Mammary epithelial cell (primary cell): ENCODE measurements at regions of chr1 and their contacts with region 1.

Region 1: DNA sequence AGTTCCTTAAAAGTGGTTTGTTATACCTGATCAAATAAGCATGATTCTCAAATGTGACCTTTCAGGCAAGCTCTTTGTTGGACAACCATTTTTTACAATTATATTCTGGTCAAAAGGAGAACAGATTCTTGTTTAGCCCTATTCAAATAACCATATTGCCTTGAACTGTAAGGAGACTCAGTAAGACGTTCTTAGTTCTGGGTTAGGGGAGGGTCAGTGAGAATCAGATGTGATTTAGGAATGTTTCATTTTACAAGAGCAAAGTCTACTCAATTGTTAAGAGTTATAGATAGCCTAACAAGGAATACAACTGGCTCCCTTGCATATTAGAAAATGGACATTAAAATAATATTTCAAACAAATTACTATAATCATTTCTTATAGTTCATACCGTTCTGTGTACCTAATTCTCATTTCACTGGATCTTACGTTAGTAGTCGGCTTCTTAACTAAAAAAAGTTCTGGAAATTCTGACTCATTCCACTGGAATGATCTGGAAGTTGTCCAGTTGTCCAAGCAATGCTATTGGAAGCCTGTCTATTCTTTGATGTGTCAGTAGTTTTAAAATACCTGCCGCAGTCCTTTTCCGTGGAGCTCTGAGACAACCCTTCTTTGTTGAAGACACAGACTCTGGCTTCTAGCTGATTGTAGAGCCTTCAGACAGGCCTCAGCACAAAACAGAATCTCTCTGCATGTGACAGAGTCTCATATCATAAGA is 88.8 kb downstream of the MAST2 start:
- DNase-seq: peak; percentile 87
- H3K4me3 ChIP-seq: peak overlapping the region in 2 of 3 experiments; percentile 6 to 15
- H3K27ac ChIP-seq: peak overlapping the region; percentile 78
- H3K4me1 ChIP-seq: peaks cover 14% of the 10 kb centered on the region
- H3K27me3 ChIP-seq: no peaks in the 10 kb centered on the region
- CTCF ChIP-seq: no peak

Region 2: DNA sequence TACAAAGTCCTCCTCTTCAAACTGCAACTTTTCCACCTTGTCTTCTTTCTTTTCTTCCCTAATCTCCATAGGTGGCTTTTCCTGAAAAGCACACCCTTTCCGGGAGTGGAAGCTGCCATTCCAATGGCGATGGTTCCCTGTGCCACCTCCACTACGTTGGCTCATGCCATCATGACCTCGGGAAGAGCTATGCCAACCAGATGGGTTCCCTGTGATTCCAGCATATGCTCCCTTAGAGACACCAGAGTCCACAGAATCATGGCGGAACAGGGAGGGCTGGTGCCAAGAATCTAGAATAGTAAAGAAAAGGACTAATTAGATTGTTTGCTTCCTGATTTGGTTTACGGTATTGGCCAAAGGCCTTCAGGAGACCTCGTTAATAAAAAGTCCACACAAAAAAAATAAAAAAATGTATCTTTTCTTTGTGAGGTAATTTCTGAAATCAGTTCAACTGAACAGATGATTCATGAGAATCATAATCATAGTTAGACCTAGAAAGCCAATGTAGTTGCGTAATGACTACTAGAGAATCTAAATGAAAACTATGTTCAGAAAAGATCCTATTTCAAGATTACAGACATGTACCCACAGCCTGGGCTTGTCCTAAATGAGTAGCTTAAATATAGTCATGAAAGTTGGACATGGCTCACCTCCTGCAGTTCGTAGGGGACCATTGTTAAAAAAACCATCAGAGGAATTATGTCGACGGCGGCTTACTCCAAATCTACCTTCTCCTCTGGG is 237.5 kb before region 1 on chr1:
- CTCF ChIA-PET with region 1: no interaction called
- dilution Hi-C with region 1: no loop called
- in situ Hi-C with region 1: loop called in 1 of 2 experiments (anchors 25 kb)
- intact Hi-C with region 1: no loop called
- DNase-seq: peak; percentile 74
- H3K4me3 ChIP-seq: no peak overlapping the region
- H3K27ac ChIP-seq: no peak overlapping the region
- H3K4me1 ChIP-seq: no peaks in the 10 kb centered on the region
- H3K27me3 ChIP-seq: no peaks in the 10 kb centered on the region
- CTCF ChIP-seq: no peak

Region 3: GRCh38 chr1:45713711-45714110 is 178.5 kb before region 1 on chr1:
- CTCF ChIA-PET with region 1: no interaction called
- dilution Hi-C with region 1: no loop called
- in situ Hi-C with region 1: no loop called
- intact Hi-C with region 1: no loop called
- DNase-seq: no peak
- H3K4me3 ChIP-seq: no peak overlapping the region
- H3K27ac ChIP-seq: no peak overlapping the region
- H3K4me1 ChIP-seq: no peaks in the 10 kb centered on the region
- H3K27me3 ChIP-seq: no peaks in the 10 kb centered on the region
- CTCF ChIP-seq: no peak

Region 4: DNA sequence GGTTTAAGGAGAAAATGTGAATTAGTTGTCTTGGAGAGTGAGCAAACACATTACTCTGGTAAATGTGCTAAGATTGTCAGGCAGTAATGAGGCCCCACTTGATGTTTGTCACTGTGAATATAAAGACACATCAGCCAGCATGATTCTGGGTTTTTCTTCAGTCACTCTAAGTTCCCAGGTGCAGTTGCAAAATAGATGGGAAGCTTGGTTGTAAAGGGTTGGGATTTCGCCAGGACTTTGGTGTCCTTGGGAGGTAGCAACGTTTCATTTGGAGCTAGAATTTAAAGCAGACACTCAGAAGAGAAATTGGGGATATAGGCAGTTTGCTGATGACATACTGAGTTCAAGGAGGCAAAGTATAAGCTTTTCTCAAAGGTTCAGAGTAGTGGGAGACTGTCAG is 65.5 kb after region 1 on chr1:
- CTCF ChIA-PET with region 1: no interaction called
- dilution Hi-C with region 1: loop called (anchors 5 kb)
- in situ Hi-C with region 1: no loop called
- intact Hi-C with region 1: no loop called
- DNase-seq: no peak
- H3K4me3 ChIP-seq: no peak overlapping the region
- H3K27ac ChIP-seq: no peak overlapping the region
- H3K4me1 ChIP-seq: peaks cover 13% of the 10 kb centered on the region
- H3K27me3 ChIP-seq: no peaks in the 10 kb centered on the region
- CTCF ChIP-seq: no peak

Region 5: DNA sequence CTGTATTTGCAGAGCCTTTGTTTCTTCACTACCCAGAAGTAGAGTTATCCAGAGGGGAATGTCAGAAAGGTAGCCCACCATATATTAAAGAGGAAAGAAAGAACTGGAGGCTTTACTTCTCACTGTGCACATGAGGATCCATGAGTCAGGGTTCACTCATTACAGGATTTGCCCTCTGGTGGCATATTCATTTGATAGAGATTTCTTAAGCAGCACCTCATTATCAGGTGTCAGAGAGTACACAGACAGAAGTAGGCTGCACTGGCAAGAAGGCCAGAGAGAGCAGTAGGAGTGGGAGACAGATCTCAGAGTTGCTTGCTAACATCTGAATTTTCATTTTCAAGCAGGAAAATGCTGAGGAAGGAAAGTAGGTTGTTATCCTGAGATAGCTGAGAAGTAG is 116.4 kb after region 1 on chr1:
- CTCF ChIA-PET with region 1: no interaction called
- dilution Hi-C with region 1: no loop called
- in situ Hi-C with region 1: no loop called
- intact Hi-C with region 1: loop called (anchors 2 kb)
- DNase-seq: peak; percentile 42
- H3K4me3 ChIP-seq: no peak overlapping the region
- H3K27ac ChIP-seq: no peak overlapping the region
- H3K4me1 ChIP-seq: no peaks in the 10 kb centered on the region
- H3K27me3 ChIP-seq: no peaks in the 10 kb centered on the region
- CTCF ChIP-seq: peak in 1 of 2 donors; percentile 41